Naive thymus-derived CD4-positive, alpha-beta T cell (primary cell): ENCODE measurements at regions of chr17 and their contacts with region 1.

Region 1: GRCh38 chr17:2401426-2402221 is 764 bp upstream of the MNT start:
- DNase-seq: peak; percentile 94 to 100 (median 99)
- ATAC-seq: peak; percentile 73
- H3K4me3 ChIP-seq: peak overlapping the region; percentile 94
- H3K4me3 Mint-ChIP-seq: peak overlapping the region; percentile 94 to 100 (median 98)
- H3K27ac ChIP-seq: peak overlapping the region; percentile 97
- H3K27ac Mint-ChIP-seq: peak overlapping the region; percentile 97 to 100 (median 99)
- H3K4me1 ChIP-seq: peaks cover 6 to 30% of the 10 kb centered on the region in 2 donors
- H3K4me1 Mint-ChIP-seq: peaks cover 27 to 62% (median 35%) of the 10 kb centered on the region in 7 donors
- H3K27me3 ChIP-seq: no peaks in the 10 kb centered on the region
- H3K27me3 Mint-ChIP-seq: no peaks in the 10 kb centered on the region

Region 2: GRCh38 chr17:1648963-1649843 is 752.4 kb before region 1 on chr17:
- CTCF ChIA-PET with region 1: no interaction called
- POLR2A ChIA-PET with region 1: no interaction called
- intact Hi-C with region 1: loop called in 1 of 2 experiments (anchors 2 kb)
- DNase-seq: peak; percentile 88 to 97 (median 93)
- ATAC-seq: peak; percentile 90
- H3K4me3 ChIP-seq: peak overlapping the region; percentile 64
- H3K4me3 Mint-ChIP-seq: peak overlapping the region; percentile 65 to 81 (median 74)
- H3K27ac ChIP-seq: peak overlapping the region; percentile 69
- H3K27ac Mint-ChIP-seq: peak overlapping the region in 5 of 9 donors; percentile 38 to 58 (median 55)
- H3K4me1 ChIP-seq: peaks cover 15 to 21% of the 10 kb centered on the region in 2 donors
- H3K4me1 Mint-ChIP-seq: peaks cover 0 to 38% (median 10%) of the 10 kb centered on the region in 7 donors
- H3K27me3 ChIP-seq: no peaks in the 10 kb centered on the region
- H3K27me3 Mint-ChIP-seq: no peaks in the 10 kb centered on the region

Region 3: DNA sequence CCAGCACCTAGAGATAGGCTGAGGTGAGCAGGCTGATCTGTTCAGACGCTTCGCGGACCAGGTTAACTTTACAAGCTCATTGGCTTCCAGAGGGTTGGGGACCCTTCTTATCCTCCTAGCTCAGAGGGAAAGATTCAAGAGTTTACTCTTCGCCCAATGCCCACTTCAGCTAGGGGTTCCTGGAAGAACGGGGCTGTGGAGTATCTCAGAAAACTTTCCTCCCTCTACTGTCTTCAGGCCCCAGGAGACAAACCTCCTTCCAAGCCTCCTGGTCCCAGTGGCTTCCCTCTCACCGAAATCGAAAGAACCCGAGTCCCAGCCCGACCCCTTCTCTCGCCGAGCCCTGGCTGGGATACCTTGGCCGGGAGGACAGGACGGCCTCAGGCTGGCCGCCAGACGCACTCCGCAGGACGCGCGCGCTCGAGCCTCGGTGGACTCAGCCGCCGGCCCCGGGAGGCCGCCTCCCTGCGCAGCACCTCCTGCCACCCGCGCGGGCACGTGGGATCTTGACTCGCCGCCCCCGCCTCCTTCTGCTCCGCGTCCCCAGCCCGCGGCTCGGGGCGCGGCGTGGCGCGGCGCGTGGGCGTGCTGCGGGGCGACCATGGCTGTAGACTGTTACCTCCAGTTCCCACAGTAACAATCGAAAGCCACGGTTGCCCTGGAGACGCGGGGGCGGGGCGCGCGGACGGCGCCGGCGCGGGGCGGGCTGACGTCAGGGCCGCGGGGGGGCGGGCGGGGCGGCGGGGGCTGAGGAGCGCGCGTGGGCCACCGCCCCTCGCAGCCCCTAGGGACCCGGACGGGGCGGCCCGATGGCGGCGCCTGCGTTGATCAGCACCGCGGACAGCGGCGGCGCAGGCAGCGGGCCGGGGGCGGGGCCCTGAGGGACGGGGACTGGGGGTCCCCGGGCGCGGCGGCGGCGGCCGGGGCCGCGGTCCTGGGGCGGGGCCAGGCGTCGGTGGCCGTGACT is 352.0 kb before region 1 on chr17:
- CTCF ChIA-PET with region 1: interaction called, 3 read pairs
- POLR2A ChIA-PET with region 1: no interaction called
- intact Hi-C with region 1: loop called in 1 of 2 experiments (anchors 1 kb)
- DNase-seq: peak; percentile 82 to 96 (median 86)
- ATAC-seq: peak; percentile 79
- H3K4me3 ChIP-seq: peak overlapping the region; percentile 75
- H3K4me3 Mint-ChIP-seq: peak overlapping the region; percentile 51 to 81 (median 74)
- H3K27ac ChIP-seq: peak overlapping the region; percentile 42
- H3K27ac Mint-ChIP-seq: peak overlapping the region in 5 of 9 donors; percentile 39 to 83 (median 66)
- H3K4me1 ChIP-seq: peaks cover 20 to 27% of the 10 kb centered on the region in 2 donors
- H3K4me1 Mint-ChIP-seq: peaks cover 8 to 37% (median 28%) of the 10 kb centered on the region in 7 donors
- H3K27me3 ChIP-seq: peaks cover 0 to 9% of the 10 kb centered on the region in 2 donors
- H3K27me3 Mint-ChIP-seq: peaks cover 0 to 15% (median 0%) of the 10 kb centered on the region in 5 donors

Region 4: DNA sequence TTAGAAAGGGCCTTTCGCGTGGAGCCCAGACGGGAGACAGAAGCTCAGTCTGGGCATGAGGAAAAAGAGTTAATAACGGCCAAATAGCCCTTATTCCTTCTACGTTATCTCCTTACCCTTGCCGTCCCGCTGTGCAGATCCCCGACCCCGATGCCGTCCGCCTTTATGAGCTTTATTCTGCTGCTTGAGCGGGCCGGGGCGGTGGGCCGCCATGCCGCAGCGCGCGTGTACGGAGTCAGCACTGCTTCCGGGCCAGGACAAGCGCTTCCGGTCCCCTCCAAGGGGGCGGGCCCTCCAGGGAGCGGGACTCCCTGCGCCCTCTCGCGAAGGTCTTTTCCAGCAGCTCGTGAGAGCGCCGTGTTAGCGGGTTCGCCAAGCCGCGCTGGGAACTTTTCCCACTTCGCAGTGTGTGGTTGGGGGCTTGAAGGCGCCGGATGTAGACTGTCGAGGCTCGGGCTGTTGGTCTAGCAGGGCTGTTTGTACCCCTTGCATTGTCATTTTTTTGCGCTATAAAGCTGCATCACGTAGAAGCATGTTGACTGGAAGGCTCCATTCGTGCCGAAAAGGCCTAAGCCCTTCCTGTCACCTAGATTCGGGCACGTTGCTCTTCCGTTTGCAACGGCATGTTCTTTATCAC is 65.3 kb before region 1 on chr17 and contains the start of gene TSR1:
- CTCF ChIA-PET with region 1: no interaction called
- POLR2A ChIA-PET with region 1: interaction called, 13 read pairs
- intact Hi-C with region 1: loop called (anchors 1 to 2 kb)
- DNase-seq: peak; percentile 78 to 91 (median 89)
- ATAC-seq: peak; percentile 91
- H3K4me3 ChIP-seq: peak within 1 kb of the TSS; percentile 99
- H3K4me3 Mint-ChIP-seq: peak within 1 kb of the TSS; percentile 97 to 99 (median 98)
- H3K27ac ChIP-seq: peak within 1 kb of the TSS; percentile 92
- H3K27ac Mint-ChIP-seq: peak within 1 kb of the TSS; percentile 88 to 98 (median 95)
- H3K4me1 ChIP-seq: peaks cover 10 to 13% of the 10 kb centered on the region in 2 donors
- H3K4me1 Mint-ChIP-seq: peaks cover 8 to 35% (median 28%) of the 10 kb centered on the region in 7 donors
- H3K27me3 ChIP-seq: no peaks in the 10 kb centered on the region
- H3K27me3 Mint-ChIP-seq: no peaks in the 10 kb centered on the region
- total RNA-seq, gene TSR1: 22.9 to 42.8 (median 30.0) TPM

Region 5: DNA sequence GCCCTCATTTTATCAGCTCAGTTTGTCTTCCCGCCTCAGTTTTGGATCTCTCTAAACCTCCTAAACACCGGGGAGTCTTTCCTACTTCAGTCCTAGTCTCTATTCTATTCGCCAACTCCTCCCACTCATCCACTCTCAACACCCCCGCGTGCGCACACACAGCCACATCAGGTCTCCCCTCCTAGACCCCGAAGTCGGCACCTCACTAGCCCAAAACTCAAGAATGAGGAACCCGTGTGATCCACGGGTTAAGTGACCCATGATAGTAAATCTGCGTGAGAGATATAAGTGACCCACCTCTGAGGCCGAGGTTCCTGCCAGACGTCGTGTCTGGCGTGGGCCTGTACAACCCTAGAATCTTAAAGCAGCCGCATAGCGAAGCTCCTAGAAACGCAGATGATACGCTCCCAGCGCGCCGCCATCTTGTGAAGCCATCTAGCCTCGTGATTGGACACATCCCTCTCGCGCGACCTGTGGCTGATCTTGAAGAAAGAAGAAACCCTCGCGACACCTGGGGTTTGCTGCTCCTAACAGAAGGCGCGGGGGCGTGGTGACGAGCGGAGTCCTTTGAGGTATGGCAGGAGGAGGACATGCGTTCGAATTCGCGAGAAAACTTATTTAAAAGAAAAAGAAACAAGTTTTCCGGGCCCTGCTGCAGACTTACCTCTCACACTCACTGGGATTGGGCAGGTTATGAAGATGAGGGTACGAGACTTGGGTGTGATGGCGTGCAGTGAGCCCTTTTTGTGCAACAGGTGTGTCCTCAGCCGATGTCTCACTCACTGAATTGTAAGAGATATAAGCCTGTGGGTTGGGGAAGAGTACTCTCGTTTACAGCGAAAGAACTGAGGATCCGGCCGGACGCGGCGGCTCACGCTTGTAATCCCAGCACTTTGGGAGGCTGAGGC is 110.1 kb after region 1 on chr17 and contains the start of gene METTL16:
- CTCF ChIA-PET with region 1: no interaction called
- POLR2A ChIA-PET with region 1: no interaction called
- intact Hi-C with region 1: loop called (anchors 1 to 5 kb)
- DNase-seq: peak; percentile 86 to 99 (median 95)
- ATAC-seq: peak; percentile 99
- H3K4me3 ChIP-seq: peak within 1 kb of the TSS; percentile 74
- H3K4me3 Mint-ChIP-seq: peak within 1 kb of the TSS in 2 of 10 donors; percentile 33 to 55
- H3K27ac ChIP-seq: peak within 1 kb of the TSS; percentile 89
- H3K27ac Mint-ChIP-seq: peak within 1 kb of the TSS in 2 of 9 donors; percentile 32 to 77
- H3K4me1 ChIP-seq: peaks cover 9 to 14% of the 10 kb centered on the region in 2 donors
- H3K4me1 Mint-ChIP-seq: peaks cover 13 to 22% (median 15%) of the 10 kb centered on the region in 7 donors
- H3K27me3 ChIP-seq: no peaks in the 10 kb centered on the region
- H3K27me3 Mint-ChIP-seq: no peaks in the 10 kb centered on the region
- total RNA-seq, gene METTL16: 33.5 to 67.7 (median 52.7) TPM

Region 6: GRCh38 chr17:3636154-3636907 is 1234.7 kb after region 1 on chr17 and contains the starts of genes CTNS and SHPK:
- CTCF ChIA-PET with region 1: no interaction called
- POLR2A ChIA-PET with region 1: no interaction called
- intact Hi-C with region 1: loop called in 1 of 2 experiments (anchors 2 kb)
- DNase-seq: peak; percentile 90 to 95 (median 95)
- ATAC-seq: peak; percentile 98
- H3K4me3 ChIP-seq: peak within 1 kb of the TSS; percentile 97
- H3K4me3 Mint-ChIP-seq: peak within 1 kb of the TSS; percentile 86 to 99 (median 98)
- H3K27ac ChIP-seq: peak within 1 kb of the TSS; percentile 98
- H3K27ac Mint-ChIP-seq: peak within 1 kb of the TSS; percentile 96 to 100 (median 99)
- H3K4me1 ChIP-seq: peaks cover 0 to 3% of the 10 kb centered on the region in 2 donors
- H3K4me1 Mint-ChIP-seq: peaks cover 17 to 45% (median 29%) of the 10 kb centered on the region in 7 donors
- H3K27me3 ChIP-seq: no peaks in the 10 kb centered on the region
- H3K27me3 Mint-ChIP-seq: no peaks in the 10 kb centered on the region
- total RNA-seq, gene CTNS: 4.7 to 15.2 (median 8.8) TPM
- total RNA-seq, gene SHPK: 6.3 to 11.2 (median 10.8) TPM